Activated naive CD4-positive, alpha-beta T cell treated with anti-CD3 and anti-CD28 coated beads, Interleukin-2, amount 10 ng/mL, durations not matched to agents 7 days and 5 days (primary cell): ENCODE measurements at regions of chr3 and their contacts with region 1.

Region 1: GRCh38 chr3:28286595-28286994 is 45.2 kb downstream of the CMC1 start:
- DNase-seq: no peak
- H3K4me3 Mint-ChIP-seq: no peak overlapping the region
- H3K27ac Mint-ChIP-seq: no peak overlapping the region
- H3K4me1 Mint-ChIP-seq: no peaks in the 10 kb centered on the region
- H3K27me3 Mint-ChIP-seq: no peaks in the 10 kb centered on the region

Region 2: DNA sequence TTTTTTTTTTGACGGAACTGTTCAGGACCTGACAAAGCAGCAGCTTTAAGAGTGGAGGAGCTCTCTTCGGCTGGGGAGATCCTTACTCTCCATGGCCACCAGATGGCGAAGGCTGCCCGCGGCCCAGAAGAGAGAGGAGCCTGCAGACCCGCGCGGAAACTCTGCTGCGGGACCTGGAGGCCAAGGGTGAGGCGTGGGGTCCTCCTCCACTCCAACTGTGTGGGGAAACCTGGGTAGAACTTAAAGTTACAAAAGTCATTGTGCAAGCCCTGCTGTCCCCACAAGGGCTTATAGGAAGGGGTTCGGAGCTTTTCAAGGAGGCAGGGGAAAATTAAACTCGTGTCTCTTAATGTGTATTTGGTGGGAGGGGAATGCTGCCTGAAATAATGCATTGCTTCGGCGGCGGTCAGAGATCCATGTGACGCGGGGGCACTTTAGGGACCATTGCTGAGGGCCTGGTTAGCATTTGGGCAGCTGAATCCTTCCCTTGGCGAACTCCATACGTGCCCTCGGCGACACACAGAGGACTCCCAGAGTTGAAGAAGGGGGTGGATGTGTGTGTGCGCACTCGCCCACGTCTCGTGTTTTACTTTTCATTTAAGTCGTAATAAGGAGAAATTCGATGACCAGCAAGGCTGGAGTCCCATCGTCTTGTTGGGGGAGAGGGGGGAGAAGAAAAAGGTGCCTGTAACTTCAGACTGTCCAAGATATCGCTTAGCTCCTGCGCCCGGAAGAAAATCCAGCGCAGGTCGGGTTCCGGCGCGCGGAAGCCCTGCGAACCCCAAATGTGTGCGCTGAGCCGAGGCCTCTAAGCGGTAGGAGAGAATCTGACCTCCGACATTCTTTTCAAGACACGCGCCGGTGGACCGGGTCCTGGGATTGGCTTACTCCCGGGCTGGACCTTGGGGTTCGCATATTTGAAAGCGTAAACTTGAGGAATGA is 574.2 kb before region 1 on chr3:
- CTCF ChIA-PET with region 1: interaction called, 18 read pairs
- DNase-seq: peak; percentile 84
- H3K4me3 Mint-ChIP-seq: peak overlapping the region; percentile 82
- H3K27ac Mint-ChIP-seq: peak overlapping the region; percentile 49
- H3K4me1 Mint-ChIP-seq: peaks cover 30% of the 10 kb centered on the region
- H3K27me3 Mint-ChIP-seq: peaks cover 74% of the 10 kb centered on the region

Region 3: DNA sequence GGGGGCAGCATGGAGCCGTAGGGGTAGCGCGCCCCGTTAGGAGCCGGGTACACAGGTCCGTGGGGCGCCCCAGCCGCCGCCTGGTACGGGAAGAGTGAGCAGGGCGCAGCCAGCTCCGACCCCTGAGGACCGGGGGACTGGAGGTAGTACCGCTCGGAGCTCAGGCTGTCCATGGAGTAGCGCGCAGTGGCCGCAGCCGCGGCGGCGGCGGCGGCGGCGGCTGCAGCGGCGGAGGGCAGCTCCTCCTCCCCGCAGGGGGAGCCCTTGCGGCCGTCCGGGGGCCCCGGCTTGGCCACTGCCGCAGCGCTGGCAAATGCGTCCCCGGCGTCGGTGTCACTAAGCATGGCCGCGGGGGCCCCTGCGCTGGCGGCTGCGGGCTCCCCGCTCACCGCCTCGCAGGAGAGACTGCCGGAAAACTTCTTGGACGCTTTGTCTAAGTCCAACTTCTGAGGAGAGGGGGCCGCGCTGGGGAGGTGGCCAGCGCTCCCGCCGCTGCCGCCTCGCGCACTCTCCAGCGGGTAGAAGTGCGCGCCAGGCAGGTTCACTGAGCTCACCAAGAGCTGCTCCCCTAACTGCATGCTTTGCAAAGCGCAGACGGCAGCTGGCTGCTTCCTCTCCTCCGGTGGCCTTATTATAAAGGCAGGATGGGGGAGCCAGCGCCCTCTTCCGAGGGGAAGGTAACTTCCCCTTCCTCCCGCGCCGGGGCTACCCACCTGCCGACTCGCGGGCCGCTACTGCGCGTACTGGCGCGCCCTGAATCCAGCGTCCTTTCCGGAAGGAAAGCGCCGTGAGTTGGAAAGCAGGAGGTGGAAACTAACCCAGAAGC is 564.7 kb before region 1 on chr3 and contains the start of gene EOMES:
- CTCF ChIA-PET with region 1: interaction called, 24 read pairs
- DNase-seq: peak; percentile 81
- H3K4me3 Mint-ChIP-seq: peak within 1 kb of the TSS; percentile 84
- H3K27ac Mint-ChIP-seq: peak within 1 kb of the TSS; percentile 68
- H3K4me1 Mint-ChIP-seq: peaks cover 36% of the 10 kb centered on the region
- H3K27me3 Mint-ChIP-seq: peaks cover 93% of the 10 kb centered on the region